ENCODE measurements at regions of chr14 and their contacts with region 1.

Region 1: GRCh38 chr14:64338616-64339316 is 44.6 kb upstream of the ESR2 start:
- DNase-seq: peak; percentile 98
- ATAC-seq: peak; percentile 90
- H3K4me3 ChIP-seq: peak overlapping the region; percentile 90
- H3K27ac ChIP-seq: peak overlapping the region; percentile 79
- H3K4me1 ChIP-seq: peaks cover 22% of the 10 kb centered on the region
- H3K27me3 ChIP-seq: no peaks in the 10 kb centered on the region
- CTCF ChIP-seq: no peak

Region 2: DNA sequence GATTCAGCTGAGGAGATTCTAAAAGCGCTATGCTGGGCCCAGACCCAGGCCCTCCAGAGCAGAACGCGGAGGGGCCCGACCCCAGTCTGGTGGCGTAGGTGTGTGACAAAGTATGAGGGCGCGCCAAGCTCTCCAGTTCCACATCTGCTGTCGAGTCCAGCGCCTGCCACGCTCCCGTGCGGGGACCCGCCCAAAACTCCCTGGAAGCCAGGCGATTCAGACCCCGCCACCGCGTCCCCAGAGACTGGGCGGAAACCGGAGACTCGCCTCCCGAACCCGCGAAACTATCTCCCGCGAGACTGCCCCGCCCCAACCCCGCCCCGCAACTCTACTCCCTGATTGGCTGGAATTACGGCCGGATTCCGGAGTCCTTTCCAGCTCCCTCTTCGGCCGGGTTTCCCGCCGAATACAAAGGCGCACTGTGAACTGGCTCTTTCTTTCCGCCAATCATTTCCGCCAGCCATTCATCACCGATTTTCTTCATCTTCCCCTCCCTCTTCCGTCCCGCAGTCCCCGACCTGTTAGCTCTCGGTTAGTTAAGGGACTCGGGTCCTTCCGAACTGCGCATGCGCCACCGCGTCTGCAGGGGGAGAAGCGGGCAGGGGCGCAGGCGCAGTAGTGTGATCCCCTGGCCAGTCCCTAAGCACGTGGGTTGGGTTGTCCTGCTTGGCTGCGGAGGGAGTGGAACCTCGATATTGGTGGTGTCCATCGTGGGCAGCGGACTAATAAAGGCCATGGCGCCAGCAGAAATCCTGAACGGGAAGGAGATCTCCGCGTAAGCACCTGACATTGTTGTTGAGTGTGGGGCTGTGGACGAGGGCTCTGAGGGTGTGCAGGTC is 49.1 kb after region 1 on chr14 and contains the start of gene MTHFD1:
- CTCF ChIA-PET with region 1: interaction called, 3 read pairs
- POLR2A ChIA-PET with region 1: no interaction called
- intact Hi-C with region 1: loop called (anchors 1 kb)
- DNase-seq: peak; percentile 99
- ATAC-seq: peak; percentile 84
- H3K4me3 ChIP-seq: peak within 1 kb of the TSS; percentile 80
- H3K27ac ChIP-seq: peak within 1 kb of the TSS; percentile 48
- H3K4me1 ChIP-seq: peaks cover 11% of the 10 kb centered on the region; the same call in 1 of the 2 replicates
- H3K27me3 ChIP-seq: no peaks in the 10 kb centered on the region
- CTCF ChIP-seq: no peak
- total RNA-seq, gene MTHFD1: 89.3 and 103 TPM in 2 replicates

Region 3: DNA sequence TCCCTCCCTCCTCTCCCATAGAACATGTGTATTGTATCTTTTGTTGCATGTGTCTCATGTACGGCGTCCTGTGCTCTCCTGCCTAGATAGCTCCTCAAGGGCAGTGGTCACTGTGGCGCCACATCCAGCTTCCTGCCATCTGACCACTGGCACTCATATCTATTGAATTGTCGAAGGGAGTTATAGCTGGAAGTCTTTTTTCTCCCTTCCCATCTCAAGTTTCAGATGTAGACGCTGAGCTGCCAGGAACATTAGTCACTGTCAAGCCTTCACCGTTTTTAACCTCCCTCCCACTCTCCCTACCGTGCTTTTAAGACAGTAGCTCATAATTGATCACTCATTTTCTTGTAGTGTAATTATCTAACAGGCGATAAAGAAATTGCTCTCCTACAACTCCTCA is 82.4 kb after region 1 on chr14:
- CTCF ChIA-PET with region 1: interaction called, 19 read pairs
- POLR2A ChIA-PET with region 1: no interaction called
- intact Hi-C with region 1: loop called (anchors 2 kb)
- DNase-seq: peak; percentile 89
- ATAC-seq: peak; percentile 96
- H3K4me3 ChIP-seq: no peak overlapping the region
- H3K27ac ChIP-seq: peak overlapping the region; percentile 44
- H3K4me1 ChIP-seq: peaks cover 14% of the 10 kb centered on the region
- H3K27me3 ChIP-seq: no peaks in the 10 kb centered on the region
- CTCF ChIP-seq: no peak

Region 4: GRCh38 chr14:64434528-64434927 is 95.8 kb after region 1 on chr14:
- CTCF ChIA-PET with region 1: interaction called, 4 read pairs
- POLR2A ChIA-PET with region 1: no interaction called
- intact Hi-C with region 1: loop called (anchors 5 kb)
- DNase-seq: no peak
- ATAC-seq: no peak
- H3K4me3 ChIP-seq: no peak overlapping the region
- H3K27ac ChIP-seq: no peak overlapping the region
- H3K4me1 ChIP-seq: peaks cover 11% of the 10 kb centered on the region
- H3K27me3 ChIP-seq: no peaks in the 10 kb centered on the region
- CTCF ChIP-seq: no peak

Region 5: GRCh38 chr14:64465191-64465822 is 126.5 kb after region 1 on chr14 and contains the start of gene AKAP5:
- CTCF ChIA-PET with region 1: interaction called, 5 read pairs
- POLR2A ChIA-PET with region 1: no interaction called
- intact Hi-C with region 1: loop called (anchors 2 kb)
- DNase-seq: peak; percentile 53
- ATAC-seq: peak; percentile 89
- H3K4me3 ChIP-seq: peak within 1 kb of the TSS; percentile 75
- H3K27ac ChIP-seq: no peak within 1 kb of the TSS
- H3K4me1 ChIP-seq: peaks cover 6% of the 10 kb centered on the region; the same call in 1 of the 2 replicates
- H3K27me3 ChIP-seq: no peaks in the 10 kb centered on the region
- CTCF ChIP-seq: no peak
- total RNA-seq, gene AKAP5: 0.58 and 0.86 TPM in 2 replicates

Region 6: GRCh38 chr14:64478634-64479250 is 140.0 kb after region 1 on chr14:
- CTCF ChIA-PET with region 1: interaction called, 17 read pairs
- POLR2A ChIA-PET with region 1: no interaction called
- intact Hi-C with region 1: no loop called
- DNase-seq: peak; percentile 64
- ATAC-seq: peak; percentile 60
- H3K4me3 ChIP-seq: no peak overlapping the region
- H3K27ac ChIP-seq: no peak overlapping the region
- H3K4me1 ChIP-seq: no peaks in the 10 kb centered on the region
- H3K27me3 ChIP-seq: no peaks in the 10 kb centered on the region
- CTCF ChIP-seq: peak; percentile 73

Region 7: GRCh38 chr14:64628940-64629408 is 290.2 kb after region 1 on chr14:
- CTCF ChIA-PET with region 1: interaction called, 10 read pairs
- POLR2A ChIA-PET with region 1: no interaction called
- intact Hi-C with region 1: no loop called
- DNase-seq: peak; percentile 92
- ATAC-seq: peak; percentile 98
- H3K4me3 ChIP-seq: no peak overlapping the region
- H3K27ac ChIP-seq: peak overlapping the region; percentile 84
- H3K4me1 ChIP-seq: peaks cover 20% of the 10 kb centered on the region
- H3K27me3 ChIP-seq: no peaks in the 10 kb centered on the region
- CTCF ChIP-seq: peak; percentile 25; the same call in 1 of the 2 replicates

Region 8: GRCh38 chr14:65070455-65070976 is 731.8 kb after region 1 on chr14:
- CTCF ChIA-PET with region 1: no interaction called
- POLR2A ChIA-PET with region 1: no interaction called
- intact Hi-C with region 1: no loop called
- DNase-seq: peak; percentile 64
- ATAC-seq: peak; percentile 59
- H3K4me3 ChIP-seq: peak overlapping the region; percentile 56
- H3K27ac ChIP-seq: peak overlapping the region; percentile 42
- H3K4me1 ChIP-seq: peaks cover 12% of the 10 kb centered on the region
- H3K27me3 ChIP-seq: no peaks in the 10 kb centered on the region
- CTCF ChIP-seq: no peak